Natural killer cell (primary cell): ENCODE measurements at regions of chr17 and their contacts with region 1.

Region 1: DNA sequence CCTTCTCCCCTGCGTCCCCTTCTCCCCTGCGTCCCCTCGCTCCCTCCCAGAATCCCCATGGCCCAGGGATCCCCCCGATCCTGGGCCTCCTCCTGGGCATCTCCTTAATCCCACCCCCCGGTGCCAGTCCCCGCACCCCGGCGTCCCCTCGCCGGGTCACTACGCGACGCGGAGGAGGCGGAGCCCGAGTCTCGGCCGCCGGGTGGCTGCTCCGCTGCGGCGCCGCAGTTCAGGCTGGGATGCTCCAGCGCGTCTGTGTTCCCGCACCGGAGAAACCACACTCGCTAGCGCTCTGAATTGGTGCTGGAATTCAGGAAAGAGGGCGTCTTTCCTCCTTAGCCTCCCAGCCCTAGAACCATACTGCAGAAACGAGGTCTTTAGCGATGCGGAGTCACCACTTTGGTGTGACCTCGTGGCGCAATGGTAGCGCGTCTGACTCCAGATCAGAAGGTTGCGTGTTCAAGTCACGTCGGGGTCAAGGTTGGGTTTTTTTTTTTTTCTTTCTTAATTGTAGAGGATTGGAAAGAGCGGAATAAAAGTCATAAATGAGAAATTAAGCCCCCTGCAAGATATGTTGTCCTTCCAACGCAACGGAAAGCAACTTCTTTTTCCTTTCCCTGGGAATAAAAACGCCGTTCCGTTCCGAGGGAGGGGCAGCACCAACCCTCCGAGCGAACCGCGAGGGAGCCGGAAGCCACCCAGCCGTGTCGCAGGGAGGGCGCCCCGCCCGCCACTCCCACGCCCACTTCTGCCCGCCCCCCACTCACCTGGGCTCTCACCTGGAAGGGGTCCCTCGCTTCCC is 25.7 kb upstream of the SLC47A1 start:
- DNase-seq: peak; percentile 88 to 95
- ATAC-seq: peak; percentile 76 to 79 (median 76)
- H3K4me3 ChIP-seq: peak overlapping the region; percentile 80
- H3K4me3 Mint-ChIP-seq: peak overlapping the region; percentile 98
- H3K27ac ChIP-seq: peak overlapping the region; percentile 66
- H3K27ac Mint-ChIP-seq: peak overlapping the region; percentile 95 to 98
- H3K4me1 ChIP-seq: peaks cover 16% of the 10 kb centered on the region
- H3K4me1 Mint-ChIP-seq: peaks cover 11% of the 10 kb centered on the region in 2 donors
- H3K27me3 ChIP-seq: no peaks in the 10 kb centered on the region
- H3K27me3 Mint-ChIP-seq: peaks cover 6% of the 10 kb centered on the region in 2 donors
- CTCF ChIP-seq: no peak

Region 2: DNA sequence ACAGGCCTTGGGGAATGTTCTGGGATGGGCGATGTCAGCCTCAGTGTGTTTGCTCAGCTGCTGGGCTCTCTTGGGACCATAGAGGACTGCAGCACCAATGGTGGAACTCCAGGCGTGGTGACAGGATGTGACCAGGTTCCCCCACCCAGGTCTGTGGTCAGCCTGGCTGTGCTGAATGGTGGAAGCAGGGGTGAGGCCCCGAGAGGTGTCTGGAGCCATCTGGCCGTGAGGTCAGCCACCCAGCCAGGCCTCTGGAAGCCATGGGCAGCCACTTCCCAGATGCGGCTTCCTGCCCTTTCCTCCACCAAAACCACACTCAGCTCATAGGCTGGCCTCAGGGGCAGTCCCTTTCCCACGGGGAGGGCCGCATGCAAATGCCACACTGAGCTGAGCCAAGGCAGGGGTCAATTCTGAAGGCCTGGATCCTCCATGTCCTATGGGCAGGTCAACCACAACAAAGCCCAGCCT is 137.4 kb before region 1 on chr17:
- intact Hi-C with region 1: loop called (anchors 5 kb)
- DNase-seq: peak in 1 of 2 donors; percentile 33
- ATAC-seq: peak; percentile 24 to 54 (median 52)
- H3K4me3 ChIP-seq: no peak overlapping the region
- H3K4me3 Mint-ChIP-seq: peak overlapping the region; percentile 91
- H3K27ac ChIP-seq: peak overlapping the region; percentile 80
- H3K27ac Mint-ChIP-seq: peak overlapping the region; percentile 91 to 95
- H3K4me1 ChIP-seq: peaks cover 58% of the 10 kb centered on the region
- H3K4me1 Mint-ChIP-seq: peaks cover 57 to 72% of the 10 kb centered on the region in 2 donors
- H3K27me3 ChIP-seq: no peaks in the 10 kb centered on the region
- H3K27me3 Mint-ChIP-seq: no peaks in the 10 kb centered on the region
- CTCF ChIP-seq: no peak

Region 3: DNA sequence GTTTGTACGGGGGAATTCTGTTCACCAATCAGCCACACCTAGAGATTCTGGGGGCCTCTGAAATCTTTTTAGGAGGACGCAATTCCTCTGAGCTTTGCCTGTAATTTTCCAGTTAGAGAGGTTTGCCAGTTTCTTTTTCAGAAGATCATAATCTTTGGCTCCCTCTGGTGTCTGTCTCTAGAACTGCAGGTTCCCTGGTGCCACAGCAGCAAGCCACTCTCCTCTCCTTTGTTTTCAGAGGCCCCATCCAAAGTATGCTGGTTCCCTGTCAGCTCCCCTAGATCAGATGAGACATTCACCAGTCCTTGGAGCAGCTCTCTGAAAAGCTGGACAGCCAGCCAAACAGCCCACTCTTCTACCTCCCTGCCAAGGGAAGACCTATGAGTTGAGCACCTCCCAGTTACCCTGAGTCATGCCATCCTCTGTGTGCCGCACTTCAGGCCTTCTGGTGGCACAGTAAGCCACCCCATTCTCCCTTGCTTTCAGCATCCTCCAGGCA is 60.8 kb before region 1 on chr17:
- intact Hi-C with region 1: no loop called
- DNase-seq: peak; percentile 57 to 85
- ATAC-seq: peak; percentile 66 to 93 (median 77)
- H3K4me3 ChIP-seq: no peak overlapping the region
- H3K4me3 Mint-ChIP-seq: peak overlapping the region; percentile 32
- H3K27ac ChIP-seq: no peak overlapping the region
- H3K27ac Mint-ChIP-seq: no peak overlapping the region
- H3K4me1 ChIP-seq: no peaks in the 10 kb centered on the region
- H3K4me1 Mint-ChIP-seq: peaks cover 6 to 8% of the 10 kb centered on the region in 2 donors
- H3K27me3 ChIP-seq: no peaks in the 10 kb centered on the region
- H3K27me3 Mint-ChIP-seq: peaks cover 7 to 24% of the 10 kb centered on the region in 2 donors
- CTCF ChIP-seq: peak; percentile 87

Region 4: DNA sequence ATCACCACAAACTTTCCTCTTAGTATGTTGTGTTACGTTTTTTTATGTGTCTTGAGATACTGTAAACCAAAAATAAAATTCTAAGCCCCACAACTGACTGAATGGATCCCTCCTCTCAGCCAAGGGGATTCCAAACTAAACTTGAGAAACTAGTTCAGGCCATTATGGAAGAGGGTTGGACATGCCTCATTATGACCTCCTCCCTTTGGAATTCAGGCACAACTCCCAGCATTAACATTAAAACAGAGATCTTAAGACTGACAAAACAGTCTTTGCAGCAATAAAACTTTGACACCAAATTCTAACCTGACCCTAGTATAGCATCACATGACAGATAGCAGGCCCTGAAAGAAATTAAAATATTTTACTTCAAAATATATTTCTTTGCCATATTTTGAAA is 25.4 kb before region 1 on chr17:
- intact Hi-C with region 1: no loop called
- DNase-seq: no peak
- ATAC-seq: no peak
- H3K4me3 ChIP-seq: no peak overlapping the region
- H3K4me3 Mint-ChIP-seq: no peak overlapping the region
- H3K27ac ChIP-seq: no peak overlapping the region
- H3K27ac Mint-ChIP-seq: no peak overlapping the region
- H3K4me1 ChIP-seq: no peaks in the 10 kb centered on the region
- H3K4me1 Mint-ChIP-seq: no peaks in the 10 kb centered on the region
- H3K27me3 ChIP-seq: no peaks in the 10 kb centered on the region
- H3K27me3 Mint-ChIP-seq: peaks cover 0 to 7% of the 10 kb centered on the region in 2 donors
- CTCF ChIP-seq: no peak